SK-N-SH (cell line): ENCODE measurements at regions of chr10 and their contacts with region 1.

Region 1: GRCh38 chr10:71343392-71343773 is 24.3 kb downstream of the SLC29A3 start:
- DNase-seq: no peak
- H3K4me3 ChIP-seq: no peak overlapping the region
- H3K27ac ChIP-seq: no peak overlapping the region
- H3K4me1 ChIP-seq: peaks cover 0 to 25% of the 10 kb centered on the region in 2 experiments; a peak in 1 of 4 replicates
- H3K27me3 ChIP-seq: no peaks in the 10 kb centered on the region
- CTCF ChIP-seq: no peak
- EP300 ChIP-seq: no peak
- RAD21 ChIP-seq: no peak

Region 2: GRCh38 chr10:71314028-71314693 is 29.2 kb before region 1 on chr10:
- CTCF ChIA-PET with region 1: interaction called, 99 read pairs
- POLR2A ChIA-PET with region 1: no interaction called
- DNase-seq: peak; percentile 81
- H3K4me3 ChIP-seq: no peak overlapping the region
- H3K27ac ChIP-seq: no peak overlapping the region
- H3K4me1 ChIP-seq: peaks cover 0 to 11% of the 10 kb centered on the region in 2 experiments; a peak in 1 of 4 replicates
- H3K27me3 ChIP-seq: no peaks in the 10 kb centered on the region
- CTCF ChIP-seq: peak; percentile 69
- EP300 ChIP-seq: no peak
- RAD21 ChIP-seq: peak; percentile 80